B cell (primary cell): ENCODE measurements at regions of chr6 and their contacts with region 1.

Region 1: DNA sequence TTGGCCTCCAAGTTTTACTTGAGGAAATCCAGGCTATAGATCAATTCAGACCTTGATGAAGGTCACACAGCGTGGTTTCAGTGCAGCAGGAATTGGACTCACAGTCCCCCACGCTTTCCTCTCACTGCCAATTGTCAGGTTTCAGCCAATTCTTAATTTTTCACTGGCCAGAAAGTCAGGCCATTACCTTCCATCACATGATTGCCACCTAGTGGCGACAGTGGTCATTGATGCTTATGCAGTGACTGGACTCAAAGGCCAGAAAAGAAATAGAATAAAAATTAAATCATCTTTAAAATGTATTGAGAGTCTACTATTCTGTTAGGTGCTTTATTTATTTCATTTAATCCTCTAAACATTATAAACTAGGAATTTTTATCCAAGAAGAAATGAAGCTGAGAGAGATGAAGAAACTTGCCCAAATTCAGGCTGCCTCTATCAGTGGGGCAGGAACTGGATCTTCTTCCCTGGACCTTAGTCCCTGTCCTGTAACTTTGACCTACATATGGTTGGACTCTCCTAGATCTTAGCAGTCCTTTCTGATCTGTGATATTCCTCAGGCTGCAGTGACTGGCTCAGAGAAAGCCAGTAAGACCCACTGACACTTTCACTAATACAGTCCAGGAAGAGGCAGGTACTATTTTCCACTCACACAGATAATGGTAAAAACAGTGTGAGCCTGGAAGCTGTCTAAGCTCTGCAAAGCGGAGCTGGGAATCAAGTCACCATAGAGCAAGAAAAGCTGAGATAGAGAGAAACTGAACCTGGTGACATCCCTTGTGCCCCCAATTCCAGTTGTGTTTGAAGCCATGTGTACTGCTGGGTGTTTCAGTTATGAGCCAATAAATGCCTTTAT is 133.3 kb downstream of the ELOVL4 start:
- DNase-seq: peak; percentile 56
- ATAC-seq: peak; percentile 51
- H3K4me3 ChIP-seq: no peak overlapping the region
- H3K4me3 Mint-ChIP-seq: no peak overlapping the region
- H3K27ac ChIP-seq: no peak overlapping the region
- H3K27ac Mint-ChIP-seq: no peak overlapping the region
- H3K4me1 ChIP-seq: no peaks in the 10 kb centered on the region
- H3K4me1 Mint-ChIP-seq: no peaks in the 10 kb centered on the region
- H3K27me3 ChIP-seq: no peaks in the 10 kb centered on the region
- H3K27me3 Mint-ChIP-seq: peaks cover 15% of the 10 kb centered on the region
- CTCF ChIP-seq: peak; percentile 93

Region 2: DNA sequence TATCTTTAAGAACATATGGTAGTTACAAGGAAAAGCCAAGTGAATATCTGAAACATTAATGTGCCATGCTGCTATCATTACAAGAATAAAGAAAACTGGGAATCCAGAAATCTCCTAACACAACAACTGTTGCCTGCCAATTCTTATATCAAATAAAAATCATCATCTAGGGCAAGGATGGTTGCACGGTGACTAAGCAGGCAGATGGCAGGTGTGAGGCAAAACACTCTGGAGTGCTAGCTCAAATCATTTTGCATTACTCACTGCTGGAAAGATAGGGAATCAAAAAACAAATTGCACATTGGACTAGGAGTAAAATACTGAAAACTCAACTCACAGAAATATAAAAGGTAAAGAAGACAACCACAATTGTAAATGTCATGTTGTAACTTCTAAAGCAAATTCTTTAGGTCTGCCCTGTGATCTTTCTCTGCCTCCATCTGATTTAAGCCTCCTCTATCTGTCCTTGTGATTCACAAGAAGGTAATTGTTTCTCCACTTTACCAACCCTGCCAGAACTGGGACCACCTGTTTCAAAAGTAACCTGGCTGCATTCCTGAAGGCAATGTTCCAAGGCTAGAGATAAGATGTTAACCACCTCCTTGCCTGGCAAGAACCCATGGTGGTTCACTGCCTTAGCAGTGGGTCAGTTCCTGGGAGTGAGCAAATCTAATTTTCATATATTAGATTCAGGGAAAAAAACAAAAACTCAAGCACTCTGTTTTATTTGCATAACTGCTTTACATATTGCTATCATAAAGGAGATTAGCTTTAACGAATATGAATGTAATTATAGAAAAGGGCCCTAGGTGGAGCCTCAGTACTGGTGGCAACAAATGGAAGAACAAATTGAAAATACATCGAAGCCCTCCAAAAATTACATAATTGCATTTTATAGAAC is 243.7 kb before region 1 on chr6:
- CTCF ChIA-PET with region 1: no interaction called
- POLR2A ChIA-PET with region 1: no interaction called
- intact Hi-C with region 1: loop called (anchors 1 kb)
- DNase-seq: peak; percentile 24
- ATAC-seq: peak; percentile 10
- H3K4me3 ChIP-seq: no peak overlapping the region
- H3K4me3 Mint-ChIP-seq: no peak overlapping the region
- H3K27ac ChIP-seq: no peak overlapping the region
- H3K27ac Mint-ChIP-seq: no peak overlapping the region
- H3K4me1 ChIP-seq: no peaks in the 10 kb centered on the region
- H3K4me1 Mint-ChIP-seq: peaks cover 7% of the 10 kb centered on the region
- H3K27me3 ChIP-seq: no peaks in the 10 kb centered on the region
- H3K27me3 Mint-ChIP-seq: peaks cover 10% of the 10 kb centered on the region
- CTCF ChIP-seq: peak; percentile 64